Lower leg skin (tissue), 4 donors: ENCODE measurements at regions of chr10 and their contacts with region 1.

Region 1: GRCh38 chr10:89563861-89564478 is 28.6 kb upstream of the SLC16A12 start:
- DNase-seq: no peak
- H3K4me3 ChIP-seq: no peak overlapping the region
- CTCF ChIP-seq: peak in 1 of 3 donors; percentile 72
- POLR2A ChIP-seq: no peak

Region 2: GRCh38 chr10:89426230-89426868 is 137.6 kb before region 1 on chr10:
- intact Hi-C with region 1: loop called (anchors 2 kb)
- DNase-seq: no peak
- H3K4me3 ChIP-seq: no peak overlapping the region
- CTCF ChIP-seq: no peak
- POLR2A ChIP-seq: no peak

Region 3: DNA sequence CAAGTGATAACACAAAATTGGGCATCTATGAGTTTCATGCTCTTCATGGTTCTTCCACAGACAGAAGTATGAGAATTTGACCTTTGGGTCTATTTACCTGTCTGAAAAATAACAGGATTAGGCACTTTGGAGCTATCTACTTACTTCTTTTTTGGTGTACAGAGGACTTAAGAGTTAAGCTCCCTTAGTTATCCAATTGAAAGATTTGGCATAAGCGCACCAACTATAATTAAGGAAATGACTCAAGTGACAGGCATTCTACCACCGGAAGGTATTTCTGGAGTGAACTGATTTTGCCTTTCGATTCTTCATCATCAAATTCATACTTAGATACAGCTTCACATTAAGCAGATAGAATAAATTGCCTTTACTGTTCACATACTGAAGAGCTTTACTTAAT is 105.7 kb before region 1 on chr10:
- intact Hi-C with region 1: no loop called
- DNase-seq: no peak
- H3K4me3 ChIP-seq: no peak overlapping the region
- CTCF ChIP-seq: no peak
- POLR2A ChIP-seq: no peak

Region 4: DNA sequence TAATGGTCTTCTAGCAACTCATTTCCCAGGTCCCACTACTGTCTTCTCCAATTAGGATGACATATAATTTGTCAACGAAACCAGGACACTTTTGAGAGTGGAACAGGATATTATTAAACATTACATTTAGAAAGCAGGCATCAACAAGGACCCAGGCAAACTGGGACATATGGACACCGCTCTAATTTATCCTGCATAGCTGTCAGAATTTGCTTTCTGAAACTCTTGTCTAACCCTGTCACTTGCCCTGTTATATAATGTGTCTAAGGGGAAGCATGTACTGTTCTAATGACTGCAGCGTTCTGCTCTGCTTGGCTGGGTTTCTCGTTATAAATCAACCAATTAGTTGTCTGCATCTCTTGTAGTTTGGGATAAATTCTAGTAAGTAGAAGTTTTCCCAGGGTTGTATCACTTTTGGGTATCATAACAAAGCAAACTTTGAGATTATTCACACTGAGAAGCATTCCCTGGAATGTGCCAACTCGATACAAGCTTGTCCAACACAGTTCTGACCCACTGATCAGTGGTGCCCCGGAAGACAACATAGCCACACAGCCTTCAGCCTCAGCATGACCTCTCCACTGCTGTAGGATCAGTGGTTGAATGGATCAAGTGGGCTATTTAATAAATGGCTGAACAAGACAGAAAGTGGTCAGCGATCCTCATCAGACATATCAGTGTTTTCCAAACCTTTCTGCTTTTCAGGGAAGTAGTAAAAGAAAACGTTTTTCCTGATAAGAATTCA is 365.5 kb after region 1 on chr10:
- intact Hi-C with region 1: no loop called
- DNase-seq: no peak
- H3K4me3 ChIP-seq: no peak overlapping the region
- CTCF ChIP-seq: no peak
- POLR2A ChIP-seq: no peak